T-cell (primary cell): ENCODE measurements at regions of chr1 and their contacts with region 1.

Region 1: GRCh38 chr1:171472183-171472647 is 13.1 kb upstream of the PRRC2C start:
- DNase-seq: no peak
- ATAC-seq: no peak
- H3K4me3 ChIP-seq: no peak overlapping the region
- H3K4me3 Mint-ChIP-seq: no peak overlapping the region
- H3K27ac ChIP-seq: no peak overlapping the region
- H3K27ac Mint-ChIP-seq: no peak overlapping the region
- H3K4me1 ChIP-seq: no peaks in the 10 kb centered on the region
- H3K4me1 Mint-ChIP-seq: no peaks in the 10 kb centered on the region
- H3K27me3 ChIP-seq: peaks cover 0 to 3% of the 10 kb centered on the region in 2 experiments
- H3K27me3 Mint-ChIP-seq: peaks cover 0 to 7% of the 10 kb centered on the region in 2 donors

Region 2: DNA sequence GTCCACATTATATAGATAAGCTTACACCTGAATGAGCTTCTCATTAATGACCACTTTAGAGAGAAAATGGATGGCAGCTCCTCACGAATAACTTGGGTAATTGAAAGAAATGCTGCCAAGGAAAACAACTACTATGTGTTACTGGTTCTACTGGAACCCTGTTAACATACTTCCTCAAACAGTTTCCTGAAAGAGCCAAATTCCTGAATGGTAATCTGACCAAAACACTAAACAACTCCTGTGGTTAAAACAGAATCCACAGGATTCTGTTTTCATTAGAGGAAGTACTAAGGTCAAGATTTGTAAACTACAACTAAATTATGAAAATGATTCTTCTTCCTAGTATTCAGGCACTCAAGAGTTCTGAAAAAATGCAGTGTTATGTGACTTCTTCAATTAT is 476.3 kb after region 1 on chr1:
- CTCF ChIA-PET with region 1: interaction called in 1 of 2 experiments, 10 read pairs
- POLR2A ChIA-PET with region 1: no interaction called
- DNase-seq: no peak
- ATAC-seq: no peak
- H3K4me3 ChIP-seq: no peak overlapping the region
- H3K4me3 Mint-ChIP-seq: no peak overlapping the region
- H3K27ac ChIP-seq: no peak overlapping the region
- H3K27ac Mint-ChIP-seq: no peak overlapping the region
- H3K4me1 ChIP-seq: no peaks in the 10 kb centered on the region
- H3K4me1 Mint-ChIP-seq: no peaks in the 10 kb centered on the region
- H3K27me3 ChIP-seq: peaks cover 0 to 3% of the 10 kb centered on the region in 2 experiments
- H3K27me3 Mint-ChIP-seq: no peaks in the 10 kb centered on the region

Region 3: GRCh38 chr1:172041742-172042141 is 569.5 kb after region 1 on chr1:
- CTCF ChIA-PET with region 1: no interaction called
- POLR2A ChIA-PET with region 1: no interaction called
- DNase-seq: no peak
- ATAC-seq: no peak
- H3K4me3 ChIP-seq: no peak overlapping the region
- H3K4me3 Mint-ChIP-seq: no peak overlapping the region
- H3K27ac ChIP-seq: no peak overlapping the region
- H3K27ac Mint-ChIP-seq: no peak overlapping the region
- H3K4me1 ChIP-seq: peaks cover 0 to 3% of the 10 kb centered on the region in 2 experiments
- H3K4me1 Mint-ChIP-seq: peaks cover 9 to 17% (median 12%) of the 10 kb centered on the region in 3 donors
- H3K27me3 ChIP-seq: no peaks in the 10 kb centered on the region
- H3K27me3 Mint-ChIP-seq: no peaks in the 10 kb centered on the region